Common myeloid progenitor, CD34-positive (primary cell): ENCODE measurements at regions of chr3 and their contacts with region 1.

Region 1: DNA sequence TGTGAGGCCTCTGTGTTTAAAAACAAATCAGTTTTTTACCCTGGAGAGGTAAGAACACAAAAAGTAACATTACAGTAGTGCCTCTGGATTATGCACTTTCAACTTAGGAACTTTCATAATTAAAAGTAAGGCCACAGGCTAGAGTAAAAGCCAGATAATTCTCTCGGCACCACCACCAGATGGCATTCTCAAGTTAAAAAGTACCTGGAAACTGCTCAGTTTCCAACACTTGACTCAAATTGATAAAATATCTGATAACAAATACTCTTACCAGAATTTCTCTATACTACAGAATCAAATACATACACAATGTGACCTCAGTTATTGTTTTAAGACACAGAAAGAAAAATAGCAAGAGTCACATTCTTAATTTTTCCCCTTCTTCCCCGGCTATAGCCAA is 19.9 kb downstream of the SPICE1 start:
- DNase-seq: peak; percentile 67 to 72 (median 70)
- H3K4me3 ChIP-seq: no peak overlapping the region
- H3K27ac ChIP-seq: no peak overlapping the region
- H3K4me1 ChIP-seq: no peaks in the 10 kb centered on the region
- H3K27me3 ChIP-seq: no peaks in the 10 kb centered on the region

Region 2: DNA sequence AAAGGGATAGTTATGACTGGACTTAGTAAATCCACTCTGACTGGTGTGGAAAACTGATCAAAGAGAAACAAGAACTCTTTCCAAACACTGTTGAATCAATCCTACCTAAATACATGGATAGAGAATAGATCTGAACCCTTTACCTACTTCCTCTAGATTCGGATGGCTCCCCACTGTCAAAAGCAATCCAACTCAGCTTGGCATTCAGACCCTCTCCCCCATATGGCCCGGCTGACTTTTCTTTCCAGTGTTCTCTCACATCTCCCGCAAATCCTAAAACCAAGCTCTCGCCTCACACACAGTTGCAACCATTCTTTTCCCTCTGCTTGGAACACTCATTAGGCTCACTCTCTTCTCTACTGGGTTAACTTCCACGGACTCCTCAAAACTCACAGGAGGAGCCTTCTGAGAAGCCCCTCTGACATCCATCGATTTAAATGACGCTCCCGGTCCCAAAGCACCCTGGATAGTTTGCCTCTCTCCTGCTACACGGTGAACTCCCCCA is 19.3 kb after region 1 on chr3:
- CTCF ChIA-PET with region 1: interaction called, 62 read pairs
- POLR2A ChIA-PET with region 1: no interaction called
- DNase-seq: no peak
- H3K4me3 ChIP-seq: peak overlapping the region; percentile 61 to 96 (median 93)
- H3K27ac ChIP-seq: peak overlapping the region; percentile 77 to 87
- H3K4me1 ChIP-seq: peaks cover 10 to 23% (median 16%) of the 10 kb centered on the region in 4 experiments
- H3K27me3 ChIP-seq: no peaks in the 10 kb centered on the region

Region 3: DNA sequence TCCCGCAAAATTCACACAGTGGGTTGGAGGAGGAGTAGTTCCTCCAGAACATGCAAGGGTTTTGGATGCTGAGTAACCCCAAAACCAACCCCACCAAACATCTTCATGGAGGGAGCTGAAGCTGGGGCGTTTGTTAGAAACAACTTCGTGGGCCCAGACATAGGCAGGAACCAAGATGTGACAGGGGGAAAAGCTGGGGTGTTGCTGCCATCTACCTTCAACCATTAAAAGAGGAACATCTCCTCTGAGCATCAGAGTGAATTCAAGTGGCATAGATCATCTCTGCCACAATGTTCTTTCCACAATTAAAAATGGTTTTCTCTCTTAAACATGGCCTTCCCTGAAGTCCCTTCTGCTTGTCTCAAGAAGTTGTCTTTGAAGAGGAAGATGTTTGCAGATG is 57.8 kb after region 1 on chr3:
- CTCF ChIA-PET with region 1: interaction called, 108 read pairs
- POLR2A ChIA-PET with region 1: no interaction called
- DNase-seq: peak; percentile 66 to 83 (median 79)
- H3K4me3 ChIP-seq: no peak overlapping the region
- H3K27ac ChIP-seq: no peak overlapping the region
- H3K4me1 ChIP-seq: no peaks in the 10 kb centered on the region
- H3K27me3 ChIP-seq: no peaks in the 10 kb centered on the region

Region 4: DNA sequence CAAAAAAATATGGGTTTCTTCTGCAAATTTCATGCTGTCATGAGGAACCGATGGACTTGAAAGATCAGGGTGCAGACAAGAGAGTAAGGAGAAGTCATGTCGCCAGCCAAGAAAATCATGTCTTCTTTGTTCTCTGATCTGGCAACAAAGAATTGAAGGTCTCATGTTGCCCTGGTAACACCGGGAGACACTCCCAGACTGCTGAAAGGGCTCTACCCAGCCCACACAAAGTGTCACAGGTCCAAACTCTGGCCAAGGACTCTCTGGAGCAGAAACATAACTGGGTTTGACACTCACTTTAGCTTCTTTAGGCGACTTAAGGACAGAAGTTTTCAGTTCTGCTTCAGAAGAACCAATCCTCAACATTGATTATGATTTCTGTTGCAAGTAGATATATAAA is 80.2 kb after region 1 on chr3:
- CTCF ChIA-PET with region 1: interaction called, 61 read pairs
- POLR2A ChIA-PET with region 1: no interaction called
- DNase-seq: no peak
- H3K4me3 ChIP-seq: no peak overlapping the region
- H3K27ac ChIP-seq: no peak overlapping the region
- H3K4me1 ChIP-seq: no peaks in the 10 kb centered on the region
- H3K27me3 ChIP-seq: no peaks in the 10 kb centered on the region

Region 5: GRCh38 chr3:113626503-113627371 is 131.7 kb after region 1 on chr3:
- CTCF ChIA-PET with region 1: interaction called, 23 read pairs
- POLR2A ChIA-PET with region 1: no interaction called
- DNase-seq: peak; percentile 80 to 88 (median 88)
- H3K4me3 ChIP-seq: peak overlapping the region in 2 of 7 experiments; percentile 6 to 55
- H3K27ac ChIP-seq: peak overlapping the region in 1 of 2 experiments; percentile 32
- H3K4me1 ChIP-seq: peaks cover 0 to 20% (median 13%) of the 10 kb centered on the region in 4 experiments
- H3K27me3 ChIP-seq: no peaks in the 10 kb centered on the region